ENCODE measurements at regions of chr17 and their contacts with region 1.

Region 1: GRCh38 chr17:75749545-75750389 is 15.2 kb downstream of the GALK1 start:
- DNase-seq: no peak
- H3K4me3 ChIP-seq: no peak overlapping the region
- H3K27me3 ChIP-seq: no peaks in the 10 kb centered on the region
- CTCF ChIP-seq: peak; percentile 92

Region 2: GRCh38 chr17:75614006-75614405 is 135.8 kb before region 1 on chr17:
- CTCF ChIA-PET with region 1: interaction called, 502 read pairs
- POLR2A ChIA-PET with region 1: no interaction called
- DNase-seq: no peak
- H3K4me3 ChIP-seq: no peak overlapping the region
- H3K27me3 ChIP-seq: no peaks in the 10 kb centered on the region
- CTCF ChIP-seq: no peak

Region 3: DNA sequence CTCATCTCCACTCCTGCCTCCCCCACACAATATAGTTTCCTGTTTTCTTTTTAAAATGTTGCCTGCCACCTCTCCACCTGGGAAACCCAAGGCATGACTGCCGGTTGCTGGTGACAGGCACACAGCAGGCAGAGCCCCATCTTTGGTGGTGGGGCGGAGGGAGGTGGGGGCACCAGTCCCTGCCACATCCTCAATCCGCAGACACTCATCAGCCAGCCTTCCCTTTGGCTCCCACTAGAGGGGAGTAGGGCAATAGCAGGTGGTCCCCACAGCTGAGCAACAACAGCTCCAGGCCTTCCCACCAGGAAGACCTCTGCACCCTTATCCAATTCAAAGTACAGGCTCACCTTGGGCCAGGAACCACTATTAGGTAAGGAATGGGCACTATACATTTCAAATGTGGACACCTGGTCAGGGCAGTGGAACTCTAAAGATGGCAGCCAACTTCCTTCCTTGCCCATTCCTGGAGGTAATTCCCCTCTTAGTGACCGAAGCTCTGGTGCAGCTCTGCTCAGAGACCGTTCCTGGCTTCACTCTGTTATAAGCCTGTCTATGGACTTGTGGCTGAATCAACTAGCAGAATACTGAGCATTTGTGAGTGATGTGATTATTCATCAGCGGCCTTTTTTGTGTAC is 96.7 kb before region 1 on chr17:
- CTCF ChIA-PET with region 1: interaction called, 55 read pairs
- POLR2A ChIA-PET with region 1: no interaction called
- DNase-seq: no peak
- H3K4me3 ChIP-seq: no peak overlapping the region
- H3K27me3 ChIP-seq: no peaks in the 10 kb centered on the region
- CTCF ChIP-seq: peak; percentile 87

Region 4: DNA sequence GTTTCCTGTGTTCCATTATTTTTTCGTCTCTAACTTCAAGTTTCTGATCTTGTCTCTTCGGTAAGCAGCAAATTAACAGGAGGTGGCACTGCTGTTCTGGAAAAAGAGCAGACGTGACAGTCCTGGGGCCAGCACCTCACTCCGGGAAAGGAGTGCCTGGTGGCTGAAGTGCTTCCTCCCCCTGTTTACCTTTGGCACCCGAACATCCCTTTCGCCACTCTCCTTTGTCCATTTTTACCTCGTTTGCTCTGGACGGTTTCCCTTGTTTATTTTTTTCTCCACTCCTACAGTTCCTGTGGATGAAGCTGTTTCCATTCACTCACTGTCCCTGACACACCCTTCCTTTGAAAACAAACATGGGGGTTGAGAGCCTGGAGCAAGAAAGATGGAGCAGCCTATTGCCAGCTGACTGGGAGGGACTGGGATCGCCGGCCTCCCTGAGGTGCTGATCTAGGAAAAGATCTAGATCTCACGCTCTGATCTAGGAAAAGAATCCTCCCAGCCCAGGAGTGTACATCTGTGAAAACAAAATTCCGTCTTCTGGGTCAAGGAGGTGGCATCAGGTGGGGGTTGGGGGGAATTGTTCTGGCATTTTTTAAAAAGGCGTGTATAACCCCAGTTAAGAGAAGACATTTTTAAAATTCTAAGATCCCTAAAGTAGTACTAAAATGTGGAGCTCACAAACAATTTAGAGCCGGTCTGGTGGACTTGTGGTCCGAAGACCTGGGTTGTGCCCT is 69.9 kb before region 1 on chr17:
- CTCF ChIA-PET with region 1: interaction called, 607 read pairs
- POLR2A ChIA-PET with region 1: interaction called, 5 read pairs
- DNase-seq: peak; percentile 51
- H3K4me3 ChIP-seq: no peak overlapping the region
- H3K27me3 ChIP-seq: no peaks in the 10 kb centered on the region
- CTCF ChIP-seq: peak; percentile 34; the same call in 1 of the 2 replicates

Region 5: GRCh38 chr17:75738218-75738802 is 11.5 kb before region 1 on chr17:
- CTCF ChIA-PET with region 1: interaction called, 17 read pairs
- POLR2A ChIA-PET with region 1: no interaction called
- DNase-seq: no peak
- H3K4me3 ChIP-seq: no peak overlapping the region
- H3K27me3 ChIP-seq: no peaks in the 10 kb centered on the region
- CTCF ChIP-seq: no peak

Region 6: GRCh38 chr17:75806886-75807500 is 57.2 kb after region 1 on chr17:
- CTCF ChIA-PET with region 1: no interaction called
- POLR2A ChIA-PET with region 1: no interaction called
- DNase-seq: no peak
- H3K4me3 ChIP-seq: no peak overlapping the region
- H3K27me3 ChIP-seq: no peaks in the 10 kb centered on the region
- CTCF ChIP-seq: no peak

Region 7: DNA sequence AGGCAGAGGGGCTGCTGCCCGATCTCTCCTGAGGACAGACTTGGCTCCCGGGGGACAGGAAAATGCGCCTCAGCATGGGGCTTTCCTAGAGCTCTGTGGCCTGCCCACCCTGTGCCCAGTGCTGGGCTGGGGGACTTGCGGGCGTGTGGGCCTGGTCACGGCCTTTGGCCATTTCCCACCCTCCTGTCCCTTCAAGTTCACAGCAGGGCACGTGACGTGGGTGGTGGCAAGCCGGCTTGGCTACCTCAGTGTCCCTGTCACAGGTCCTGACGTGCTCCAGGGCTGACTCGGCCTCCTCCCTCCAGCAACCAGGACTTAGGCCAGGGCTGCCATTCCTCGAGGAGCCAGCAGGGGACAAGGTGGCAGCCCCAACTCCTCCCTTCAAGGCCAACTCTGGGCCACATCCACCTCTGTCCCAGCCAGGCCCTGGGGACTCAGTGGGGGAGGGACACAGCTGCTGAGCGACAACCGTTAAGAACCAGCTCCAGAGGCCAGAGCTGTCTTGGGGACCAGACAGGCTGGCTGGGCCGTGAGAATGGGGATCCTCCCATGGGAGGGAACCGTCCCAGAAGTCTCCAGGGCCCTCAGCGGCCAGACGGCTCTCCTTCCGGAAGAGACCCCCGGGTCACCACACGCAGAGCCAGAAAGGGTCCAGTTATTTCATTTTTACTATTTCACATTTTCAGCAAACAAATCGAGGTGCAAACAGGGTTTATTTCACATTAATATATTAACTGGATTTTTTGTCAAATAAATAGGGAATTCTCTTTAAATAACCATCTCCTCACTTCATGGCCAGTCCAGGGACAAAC is 95.5 kb after region 1 on chr17:
- CTCF ChIA-PET with region 1: interaction called, 10 read pairs
- POLR2A ChIA-PET with region 1: no interaction called
- DNase-seq: no peak
- H3K4me3 ChIP-seq: no peak overlapping the region
- H3K27me3 ChIP-seq: no peaks in the 10 kb centered on the region
- CTCF ChIP-seq: peak; percentile 77